ENCODE measurements at regions of chr2 and their contacts with region 1.

Region 1: DNA sequence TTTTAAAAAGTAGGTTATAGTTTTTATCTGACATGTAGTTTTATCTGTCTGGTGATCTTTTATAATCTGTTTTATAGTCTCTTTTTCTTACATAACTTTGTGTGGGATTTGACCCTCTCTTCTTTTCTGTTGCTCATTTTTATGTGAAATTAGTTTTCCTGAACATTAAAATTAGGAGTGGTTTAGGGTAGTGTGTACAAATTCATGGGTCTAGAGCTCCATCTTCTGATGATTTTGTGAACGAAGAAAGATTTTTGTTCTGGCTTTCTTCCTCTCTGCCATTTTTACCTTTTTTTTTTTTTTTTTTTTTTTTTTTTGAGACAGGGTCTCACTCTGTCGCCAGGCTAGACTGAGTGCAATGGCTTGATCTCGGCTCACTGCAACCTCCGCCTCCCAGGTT is 46.6 kb downstream of the SLC30A6 start:
- DNase-seq: no peak
- ATAC-seq: no peak
- H3K4me3 ChIP-seq: no peak overlapping the region
- H3K27ac ChIP-seq: no peak overlapping the region
- H3K4me1 ChIP-seq: no peaks in the 10 kb centered on the region
- H3K27me3 ChIP-seq: no peaks in the 10 kb centered on the region
- CTCF ChIP-seq: no peak

Region 2: GRCh38 chr2:32200814-32201213 is 11.5 kb before region 1 on chr2:
- intact Hi-C with region 1: loop called in 1 of 10 experiments (anchors 1 kb)
- DNase-seq: no peak
- ATAC-seq: no peak
- H3K4me3 ChIP-seq: no peak overlapping the region
- H3K27ac ChIP-seq: no peak overlapping the region
- H3K4me1 ChIP-seq: peaks cover 0 to 4% (median 0%) of the 10 kb centered on the region in 9 donors
- H3K27me3 ChIP-seq: no peaks in the 10 kb centered on the region
- CTCF ChIP-seq: no peak